Pancreas (tissue), 10 donors: ENCODE measurements at regions of chr16 and their contacts with region 1.

Region 1: GRCh38 chr16:71894921-71895678 is at the start of gene IST1:
- DNase-seq: peak; percentile 96 to 98 (median 98)
- ATAC-seq: peak; percentile 94 to 98 (median 95)
- H3K4me3 ChIP-seq: peak within 1 kb of the TSS; percentile 78 to 98 (median 94)
- H3K27ac ChIP-seq: peak within 1 kb of the TSS; percentile 67 to 98 (median 94)
- H3K4me1 ChIP-seq: peaks cover 0 to 29% (median 11%) of the 10 kb centered on the region in 3 donors
- H3K27me3 ChIP-seq: no peaks in the 10 kb centered on the region
- CTCF ChIP-seq: no peak
- total RNA-seq, gene IST1: 56.1 to 115 (median 69.4) TPM

Region 2: DNA sequence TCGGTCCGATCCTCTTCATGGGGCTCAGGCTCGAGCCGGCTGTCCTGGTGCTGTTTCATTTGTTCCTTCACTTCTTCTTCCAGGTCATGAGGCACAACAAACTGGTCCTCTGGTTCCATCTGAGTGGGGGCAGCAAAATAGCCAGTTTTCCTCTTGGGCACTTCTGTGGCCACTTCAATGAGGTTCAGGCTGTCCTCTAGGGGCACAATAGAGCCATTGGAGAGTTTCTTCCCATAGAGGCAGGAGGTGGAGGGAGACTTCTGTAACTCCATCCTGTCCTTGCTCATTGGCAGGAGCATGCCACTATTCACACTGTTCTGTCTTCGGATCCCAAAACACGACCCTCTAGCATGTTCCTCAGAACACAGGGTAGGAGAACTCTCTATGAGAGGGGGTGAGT is 246.2 kb before region 1 on chr16:
- intact Hi-C with region 1: no loop called
- DNase-seq: no peak
- ATAC-seq: peak; percentile 34 to 55 (median 42)
- H3K4me3 ChIP-seq: no peak overlapping the region
- H3K27ac ChIP-seq: no peak overlapping the region
- H3K4me1 ChIP-seq: peaks cover 0 to 13% (median 0%) of the 10 kb centered on the region in 3 donors
- H3K27me3 ChIP-seq: no peaks in the 10 kb centered on the region
- CTCF ChIP-seq: peak in 3 of 4 donors; percentile 12 to 16 (median 14)

Region 3: GRCh38 chr16:71808593-71809459 is 86.3 kb before region 1 on chr16 and contains the start of gene AP1G1:
- intact Hi-C with region 1: loop called in 1 of 3 experiments (anchors 10 kb)
- DNase-seq: peak; percentile 89 to 98 (median 96)
- ATAC-seq: peak; percentile 90 to 96 (median 93)
- H3K4me3 ChIP-seq: peak within 1 kb of the TSS; percentile 73 to 98 (median 92)
- H3K27ac ChIP-seq: peak within 1 kb of the TSS; percentile 97 to 99 (median 97)
- H3K4me1 ChIP-seq: peaks cover 9 to 24% (median 9%) of the 10 kb centered on the region in 3 donors
- H3K27me3 ChIP-seq: no peaks in the 10 kb centered on the region
- CTCF ChIP-seq: no peak
- total RNA-seq, gene AP1G1: 31.6 to 50.8 (median 39.8) TPM